ENCODE measurements at regions of chr16 and their contacts with region 1.

Region 1: GRCh38 chr16:24925163-24925562 is 79.4 kb downstream of the SLC5A11 start:
- DNase-seq: no peak
- H3K4me3 ChIP-seq: no peak overlapping the region
- CTCF ChIP-seq: no peak

Region 2: GRCh38 chr16:24906199-24907020 is 18.8 kb before region 1 on chr16:
- CTCF ChIA-PET with region 1: interaction called, 17 read pairs
- POLR2A ChIA-PET with region 1: no interaction called
- DNase-seq: no peak
- H3K4me3 ChIP-seq: no peak overlapping the region
- CTCF ChIP-seq: peak; percentile 33

Region 3: GRCh38 chr16:25014500-25015147 is 89.5 kb after region 1 on chr16:
- CTCF ChIA-PET with region 1: no interaction called
- POLR2A ChIA-PET with region 1: no interaction called
- DNase-seq: no peak
- H3K4me3 ChIP-seq: peak overlapping the region; percentile 93
- CTCF ChIP-seq: no peak

Measured in AG04449 (cell line).